HEK293 (cell line): ENCODE measurements at regions of chr16 and their contacts with region 1.

Region 1: DNA sequence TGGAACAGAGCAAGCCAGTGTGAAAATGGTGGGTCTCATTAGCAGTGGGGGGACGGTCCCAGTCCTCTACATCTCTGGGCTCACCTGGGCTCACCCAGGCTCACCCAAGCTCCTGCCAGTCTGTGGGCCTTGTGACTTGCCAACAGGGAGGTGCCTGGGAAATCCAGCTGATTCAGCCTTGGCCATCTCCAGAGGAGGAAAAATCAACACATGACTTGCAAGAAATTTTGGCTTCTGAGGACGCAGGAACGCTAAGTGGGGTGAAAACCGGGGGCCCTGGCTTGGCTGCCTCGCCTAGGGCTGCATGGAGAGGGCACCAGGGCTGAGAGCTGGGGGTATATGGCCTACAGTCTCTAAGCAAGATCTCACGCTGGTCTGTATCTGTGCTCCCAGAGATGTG is 47.7 kb downstream of the VAC14 start:
- H3K4me3 ChIP-seq: no peak overlapping the region
- H3K27ac ChIP-seq: no peak overlapping the region
- H3K4me1 ChIP-seq: no peaks in the 10 kb centered on the region
- CTCF ChIP-seq: no peak

Region 2: GRCh38 chr16:70737377-70738082 is 15.7 kb before region 1 on chr16:
- CTCF ChIA-PET with region 1: interaction called, 14 read pairs
- POLR2A ChIA-PET with region 1: no interaction called
- H3K4me3 ChIP-seq: no peak overlapping the region
- H3K27ac ChIP-seq: no peak overlapping the region
- H3K4me1 ChIP-seq: no peaks in the 10 kb centered on the region
- CTCF ChIP-seq: no peak